Panc1 (cell line): ENCODE measurements at regions of chr17 and their contacts with region 1.

Region 1: DNA sequence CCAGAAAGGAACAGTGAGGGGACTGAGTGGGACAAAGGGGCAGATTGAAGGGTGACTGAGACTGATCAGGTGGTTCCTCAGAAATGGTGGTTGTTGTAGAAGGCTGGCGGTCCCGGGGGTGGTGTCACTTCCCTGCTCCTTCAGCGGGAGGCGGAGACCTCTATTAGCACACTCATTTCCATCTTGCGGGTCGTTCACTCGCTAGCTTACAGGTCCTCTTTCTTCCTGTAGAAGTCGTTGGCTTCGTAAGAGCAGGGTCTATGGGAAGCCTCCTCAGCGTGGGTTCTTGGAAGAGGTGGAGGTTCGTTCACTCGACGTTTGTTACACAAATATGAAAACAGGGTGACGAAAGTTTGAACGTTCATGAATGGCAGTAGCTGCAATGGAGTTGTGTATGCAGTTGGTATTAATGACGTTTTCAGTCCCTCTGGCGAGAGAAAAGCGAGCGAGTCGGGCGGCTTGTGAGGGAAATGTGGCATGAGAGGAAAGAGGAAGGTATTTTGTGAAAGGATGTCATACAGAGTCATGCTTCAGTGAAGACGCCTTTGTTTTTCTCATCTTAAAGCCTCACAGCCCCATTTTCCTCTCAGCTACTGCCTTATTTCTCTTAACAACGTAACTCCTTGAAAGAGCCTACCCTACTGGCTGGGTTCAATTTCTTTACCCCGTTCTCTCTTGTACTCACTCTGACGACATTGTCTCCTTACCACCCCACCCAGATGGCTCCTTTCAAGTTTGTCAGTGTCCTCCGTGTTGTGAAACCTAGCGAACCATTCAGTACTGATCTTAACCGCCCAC is 667 bp downstream of the EFCAB13 start:
- DNase-seq: peak; percentile 30
- ATAC-seq: peak; percentile 76
- H3K4me3 ChIP-seq: peak overlapping the region; percentile 67 to 90
- H3K27ac ChIP-seq: peak overlapping the region; percentile 95
- H3K4me1 ChIP-seq: no peaks in the 10 kb centered on the region; the same call in 1 of the 2 replicates
- H3K27me3 ChIP-seq: no peaks in the 10 kb centered on the region
- CTCF ChIP-seq: no peak

Region 2: DNA sequence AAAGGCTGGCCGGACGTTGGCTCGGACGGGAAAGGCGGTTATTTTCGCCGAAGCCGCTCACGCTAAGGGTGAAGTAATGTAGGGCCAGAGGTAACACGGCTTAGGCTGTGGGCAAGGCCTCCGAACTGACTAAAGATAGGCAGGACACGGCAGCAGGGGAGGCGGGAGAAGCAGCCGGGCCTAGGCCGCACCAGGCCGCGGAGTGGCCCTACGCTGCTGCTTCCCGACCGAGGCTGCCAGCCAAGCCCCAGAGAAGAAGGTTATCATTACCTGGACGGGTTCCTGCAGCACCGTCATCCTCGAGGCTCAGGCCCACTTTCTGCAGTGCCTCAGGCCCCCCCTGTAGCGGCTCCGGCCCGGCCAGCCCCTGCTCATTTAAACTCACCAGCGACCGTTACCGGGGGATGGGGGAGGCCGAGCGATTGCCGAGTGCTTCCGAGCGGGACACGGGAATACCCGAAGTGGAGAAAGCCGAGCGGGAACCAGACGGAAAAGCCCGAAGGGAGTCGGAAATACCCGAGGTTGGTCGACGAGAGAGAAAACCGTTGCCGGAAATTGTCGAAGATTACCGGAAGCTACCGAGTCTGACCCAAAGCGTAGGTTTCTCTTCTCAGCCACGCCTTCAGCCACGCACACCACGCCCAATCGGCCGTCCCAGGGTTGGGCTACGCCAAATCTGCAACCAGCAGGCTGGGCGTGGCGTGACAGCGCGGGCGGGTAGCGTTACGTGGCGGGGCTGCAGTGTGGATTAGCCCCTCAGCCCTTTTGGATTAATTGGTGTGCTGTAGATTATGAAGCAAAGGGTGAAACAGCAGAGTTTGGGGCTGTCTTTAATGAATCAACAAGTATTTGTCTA is 135.3 kb before region 1 on chr17 and contains the start of gene CDC27:
- CTCF ChIA-PET with region 1: no interaction called
- POLR2A ChIA-PET with region 1: interaction called, 10 read pairs
- in situ Hi-C with region 1: no loop called
- intact Hi-C with region 1: no loop called
- DNase-seq: peak; percentile 93
- ATAC-seq: peak; percentile 98
- H3K4me3 ChIP-seq: peak within 1 kb of the TSS; percentile 95
- H3K27ac ChIP-seq: peak within 1 kb of the TSS; percentile 99
- H3K4me1 ChIP-seq: peaks cover 13% of the 10 kb centered on the region
- H3K27me3 ChIP-seq: no peaks in the 10 kb centered on the region
- CTCF ChIP-seq: no peak
- total RNA-seq, gene CDC27: 97.5 TPM